PC-3 (cell line): ENCODE measurements at regions of chr6 and their contacts with region 1.

Region 1: DNA sequence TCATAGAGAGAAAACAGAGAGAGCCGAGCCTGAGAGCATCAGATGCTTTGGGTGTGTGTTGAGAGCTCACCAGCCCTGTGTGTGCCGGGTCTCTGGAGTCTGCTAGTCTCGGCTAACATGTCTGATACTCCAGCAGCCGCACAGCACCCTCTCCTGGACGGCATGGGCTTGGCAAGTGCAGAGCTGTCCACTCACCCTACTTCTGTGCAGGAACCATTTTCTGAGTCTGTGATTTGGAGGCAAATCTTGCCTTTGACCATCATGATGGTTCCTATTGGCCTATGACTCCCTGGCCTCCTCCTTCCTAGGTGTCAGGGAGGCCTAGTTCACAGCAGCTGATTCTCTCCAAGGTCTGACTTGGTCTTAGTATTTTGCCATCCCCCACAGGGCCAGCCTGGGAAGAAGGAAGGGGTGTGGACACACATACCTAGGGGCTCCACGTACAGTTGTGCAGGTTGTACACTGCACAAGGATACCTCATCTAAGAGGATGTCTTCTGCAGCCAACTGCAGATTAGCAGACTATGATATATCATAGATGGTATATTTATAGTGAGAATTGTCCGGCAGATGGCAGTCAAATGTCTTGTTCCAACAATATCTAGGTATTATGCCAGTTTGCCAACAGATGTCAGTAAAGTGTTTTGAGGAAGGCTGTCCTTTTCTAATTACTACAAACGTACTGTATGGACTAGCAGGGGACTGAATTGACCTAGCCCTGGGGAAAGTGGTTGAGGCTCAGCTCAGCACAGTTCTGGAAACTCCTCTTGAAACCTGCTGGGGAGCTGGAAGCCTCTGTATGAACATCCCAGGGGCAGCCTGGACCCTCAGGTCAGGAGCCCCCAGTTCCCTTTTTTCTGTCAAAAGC is 13.0 kb downstream of the FGD2 start:
- DNase-seq: peak; percentile 94
- ATAC-seq: peak; percentile 96
- H3K4me3 ChIP-seq: no peak overlapping the region
- H3K27ac ChIP-seq: peak overlapping the region; percentile 70
- H3K4me1 ChIP-seq: peaks cover 36% of the 10 kb centered on the region
- H3K27me3 ChIP-seq: no peaks in the 10 kb centered on the region
- CTCF ChIP-seq: peak; percentile 85

Region 2: GRCh38 chr6:36885461-36886401 is 132.7 kb before region 1 on chr6 and contains the start of gene C6orf89:
- CTCF ChIA-PET with region 1: interaction called, 19 read pairs
- POLR2A ChIA-PET with region 1: no interaction called
- intact Hi-C with region 1: loop called (anchors 1 kb)
- DNase-seq: peak; percentile 98
- ATAC-seq: peak; percentile 100
- H3K4me3 ChIP-seq: peak within 1 kb of the TSS; percentile 80
- H3K27ac ChIP-seq: 0 out of 2 replicates have a peak within 1 kb of the TSS, but pooled peaks have one; percentile 10
- H3K4me1 ChIP-seq: peaks cover 11% of the 10 kb centered on the region
- H3K27me3 ChIP-seq: no peaks in the 10 kb centered on the region
- CTCF ChIP-seq: peak; percentile 86
- total RNA-seq, gene C6orf89: 23.2 and 27.8 TPM in 2 replicates

Region 3: GRCh38 chr6:36912586-36912985 is 105.8 kb before region 1 on chr6:
- CTCF ChIA-PET with region 1: interaction called, 23 read pairs
- POLR2A ChIA-PET with region 1: no interaction called
- intact Hi-C with region 1: loop called (anchors 1 kb)
- DNase-seq: peak; percentile 96
- ATAC-seq: peak; percentile 88
- H3K4me3 ChIP-seq: peak overlapping the region; percentile 35; the same call in 1 of the 2 replicates
- H3K27ac ChIP-seq: peak overlapping the region; percentile 66
- H3K4me1 ChIP-seq: peaks cover 52% of the 10 kb centered on the region
- H3K27me3 ChIP-seq: no peaks in the 10 kb centered on the region
- CTCF ChIP-seq: peak; percentile 40; the same call in 1 of the 2 replicates

Region 4: GRCh38 chr6:36929607-36930006 is 88.8 kb before region 1 on chr6:
- CTCF ChIA-PET with region 1: no interaction called
- POLR2A ChIA-PET with region 1: no interaction called
- intact Hi-C with region 1: no loop called
- DNase-seq: peak; percentile 49
- ATAC-seq: peak; percentile 83
- H3K4me3 ChIP-seq: no peak overlapping the region
- H3K27ac ChIP-seq: no peak overlapping the region
- H3K4me1 ChIP-seq: peaks cover 23% of the 10 kb centered on the region
- H3K27me3 ChIP-seq: no peaks in the 10 kb centered on the region
- CTCF ChIP-seq: no peak

Region 5: DNA sequence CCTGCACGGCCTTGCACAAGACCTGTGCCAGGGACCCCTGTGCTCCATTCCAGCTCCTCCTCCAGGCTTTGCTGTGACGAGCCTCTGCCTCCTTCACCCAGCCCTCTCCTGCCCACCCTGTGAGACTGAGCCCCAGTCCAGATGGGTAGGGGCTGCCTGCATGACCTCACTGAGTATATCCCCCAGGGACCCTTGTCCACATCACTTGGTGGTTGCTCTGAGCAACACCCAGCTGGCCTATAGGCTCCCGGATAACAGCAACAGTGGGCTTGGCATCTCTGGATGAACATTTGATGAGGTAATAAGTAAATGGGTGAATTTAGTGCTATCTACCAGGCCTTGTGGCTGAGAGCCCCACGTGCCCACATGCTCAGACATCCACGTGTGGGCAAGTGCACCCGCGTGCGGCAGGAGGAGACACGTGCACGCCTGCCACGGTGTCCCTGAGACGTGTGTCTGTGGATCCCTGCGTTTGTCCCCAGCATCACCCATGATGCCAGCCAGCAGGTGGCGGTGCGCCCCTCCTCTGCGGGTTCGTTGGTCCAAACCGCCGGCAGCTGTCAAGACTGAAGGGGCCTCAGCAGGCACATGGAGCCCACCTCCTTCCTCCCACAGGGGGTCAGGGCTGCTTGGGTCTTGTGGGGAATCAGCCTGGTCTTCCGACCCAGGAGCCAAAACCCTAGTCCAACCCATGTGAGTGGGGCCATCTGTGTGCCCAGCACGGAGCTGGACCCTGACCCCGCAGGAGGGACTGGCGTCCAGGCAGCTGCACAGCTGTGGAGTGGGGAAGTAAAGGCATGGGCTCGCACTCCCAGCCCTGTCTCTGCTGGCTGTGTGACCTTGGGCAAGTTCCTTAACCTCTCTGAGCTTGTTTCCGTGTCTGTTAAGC is 33.0 kb after region 1 on chr6:
- CTCF ChIA-PET with region 1: interaction called, 8 read pairs
- POLR2A ChIA-PET with region 1: no interaction called
- intact Hi-C with region 1: loop called (anchors 2 kb)
- DNase-seq: peak; percentile 86
- ATAC-seq: peak; percentile 68
- H3K4me3 ChIP-seq: no peak overlapping the region
- H3K27ac ChIP-seq: no peak overlapping the region
- H3K4me1 ChIP-seq: peaks cover 26% of the 10 kb centered on the region
- H3K27me3 ChIP-seq: no peaks in the 10 kb centered on the region
- CTCF ChIP-seq: peak; percentile 96